ENCODE measurements at regions of chr1 and their contacts with region 1.

Region 1: GRCh38 chr1:5514519-5515183 is 477.6 kb downstream of the NPHP4 start:
- DNase-seq: peak; percentile 45 to 82 (median 56)
- ATAC-seq: peak in 3 of 4 donors; percentile 64 to 73 (median 64)
- H3K4me3 ChIP-seq: no peak overlapping the region
- H3K27ac ChIP-seq: no peak overlapping the region
- H3K4me1 ChIP-seq: no peaks in the 10 kb centered on the region
- H3K27me3 ChIP-seq: peaks cover 0 to 38% (median 7%) of the 10 kb centered on the region in 9 donors
- CTCF ChIP-seq: peak; percentile 99 to 100 (median 100)
- POLR2A ChIP-seq: no peak

Region 2: DNA sequence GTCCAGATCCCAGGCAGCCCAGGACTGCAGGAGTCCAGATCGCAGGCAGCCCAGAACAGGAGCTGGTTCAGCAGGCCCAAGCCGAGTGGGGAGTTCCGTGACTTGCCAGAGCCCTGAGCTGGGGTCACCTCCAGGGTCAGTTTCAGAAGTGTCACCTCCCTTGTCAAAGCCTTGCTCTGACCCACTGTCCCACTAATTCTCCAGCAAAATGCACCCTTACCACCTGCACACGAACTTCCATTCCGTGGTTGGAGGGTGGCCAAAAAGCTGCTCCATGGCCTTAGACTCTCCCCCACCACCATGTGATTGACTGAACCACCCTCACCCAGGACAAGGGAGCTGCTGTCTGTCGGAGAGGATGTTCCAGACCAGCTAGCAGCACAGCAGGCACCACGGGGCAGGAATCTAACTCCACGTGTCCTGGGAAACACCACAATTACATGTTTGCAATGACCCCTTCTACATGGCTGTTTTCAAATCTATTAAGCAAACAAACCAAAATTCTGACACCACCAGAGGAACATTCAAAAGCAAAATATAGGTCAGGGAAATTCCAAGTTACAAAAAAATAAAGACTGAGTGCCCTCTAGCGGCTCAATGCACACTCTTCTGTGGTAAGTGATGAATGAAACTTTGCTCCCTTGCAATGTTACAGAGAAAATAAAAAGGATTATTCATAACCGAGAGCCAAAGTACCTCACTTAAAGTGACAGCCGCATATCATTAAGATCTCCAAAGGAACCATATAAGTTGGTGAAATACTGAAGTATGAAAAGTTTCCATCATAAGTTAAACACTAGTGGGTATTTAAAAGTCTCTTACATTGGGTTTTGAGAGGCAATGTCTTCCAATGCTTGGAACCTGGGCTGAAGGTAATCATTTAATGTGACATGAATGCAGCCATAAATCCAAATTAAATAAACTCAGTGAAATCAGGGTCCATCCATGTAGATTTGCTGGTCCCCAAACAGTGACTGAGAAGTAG is 401.2 kb after region 1 on chr1:
- intact Hi-C with region 1: loop called (anchors 1 to 10 kb)
- DNase-seq: no peak
- ATAC-seq: peak in 3 of 4 donors; percentile 39 to 52 (median 46)
- H3K4me3 ChIP-seq: no peak overlapping the region
- H3K27ac ChIP-seq: no peak overlapping the region
- H3K4me1 ChIP-seq: peaks cover 0 to 6% (median 0%) of the 10 kb centered on the region in 12 donors
- H3K27me3 ChIP-seq: no peaks in the 10 kb centered on the region
- CTCF ChIP-seq: peak; percentile 37 to 76 (median 56)
- POLR2A ChIP-seq: no peak

Region 3: DNA sequence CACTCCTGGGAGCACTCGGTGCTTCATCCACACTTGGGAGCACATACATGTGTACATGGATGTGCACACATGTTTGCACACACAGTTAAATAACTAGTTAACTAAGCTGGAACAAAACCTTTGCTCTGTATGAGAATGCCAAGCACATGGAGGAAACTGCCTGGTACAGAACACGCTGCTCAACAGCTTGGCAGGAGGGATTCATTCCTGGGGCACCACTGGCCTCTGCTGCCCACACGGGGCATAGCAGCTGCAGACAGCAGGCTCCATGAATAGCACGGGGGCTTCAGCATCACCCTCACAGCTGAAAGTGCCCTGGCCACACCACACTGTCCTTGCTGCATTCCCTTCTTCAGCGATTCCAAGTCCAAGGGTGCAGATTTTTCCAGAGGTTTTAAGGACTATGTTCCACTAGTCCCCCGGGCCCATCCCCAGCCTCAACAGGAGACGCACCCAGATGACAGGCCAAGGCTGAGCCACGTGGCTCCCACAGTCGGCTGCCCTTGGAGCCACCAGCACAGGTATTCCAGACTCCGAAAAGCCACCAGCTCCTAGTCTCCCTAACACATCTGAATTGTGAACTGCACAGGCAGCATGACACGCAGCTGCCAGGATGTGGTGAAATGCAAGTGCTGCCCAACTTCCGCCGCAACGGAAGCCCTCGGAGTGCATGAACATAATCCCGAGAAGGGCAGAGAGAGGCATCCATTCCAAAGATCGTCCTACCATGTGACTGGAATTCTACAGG is 460.7 kb after region 1 on chr1:
- intact Hi-C with region 1: loop called in 9 of 10 experiments (anchors 2 to 10 kb)
- DNase-seq: peak in 2 of 5 donors; percentile 55 to 76
- ATAC-seq: peak; percentile 71 to 91 (median 89)
- H3K4me3 ChIP-seq: no peak overlapping the region
- H3K27ac ChIP-seq: no peak overlapping the region
- H3K4me1 ChIP-seq: peaks cover 0 to 5% (median 0%) of the 10 kb centered on the region in 12 donors
- H3K27me3 ChIP-seq: no peaks in the 10 kb centered on the region
- CTCF ChIP-seq: peak; percentile 42 to 70 (median 60)
- POLR2A ChIP-seq: no peak

Measured in heart left ventricle (tissue), 16 donors.